GM10248 (cell line): ENCODE measurements at regions of chr7 and their contacts with region 1.

Region 1: DNA sequence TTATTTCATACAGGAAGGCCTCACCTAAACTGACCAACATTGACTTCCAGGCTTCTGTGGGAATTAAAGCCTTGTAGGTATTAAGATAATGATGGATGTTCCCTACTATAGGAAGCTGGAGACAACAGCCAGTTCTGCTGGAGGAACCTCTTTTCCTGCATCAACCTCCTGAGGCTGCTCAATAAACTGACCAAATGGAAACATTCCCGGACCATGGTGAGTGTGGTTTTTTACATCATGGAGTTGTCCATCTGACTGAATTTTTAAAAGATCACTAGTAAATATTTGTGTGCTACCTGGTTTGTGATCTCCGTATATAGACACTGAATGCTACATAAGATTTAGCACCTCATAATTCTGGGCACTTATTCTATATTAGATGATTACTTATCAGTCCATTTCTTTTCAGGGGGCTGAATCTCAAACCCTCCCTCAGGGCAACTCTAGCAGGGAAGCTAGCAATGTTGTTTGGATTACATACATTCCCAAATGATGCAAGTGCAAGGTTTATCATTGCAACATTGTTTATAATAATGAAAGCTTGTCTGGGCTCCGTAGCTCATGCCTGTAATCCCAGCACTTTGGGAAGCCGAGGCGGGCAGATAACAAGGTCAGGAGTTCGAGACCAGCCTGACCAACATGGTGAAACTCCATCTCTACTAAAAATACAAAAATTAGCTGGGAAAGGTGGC is 21.5 kb upstream of the SMKR1 start:
- DNase-seq: no peak
- CTCF ChIP-seq: no peak

Region 2: GRCh38 chr7:129271500-129272355 is 209.1 kb before region 1 on chr7:
- CTCF ChIA-PET with region 1: no interaction called
- POLR2A ChIA-PET with region 1: no interaction called
- DNase-seq: peak; percentile 59
- CTCF ChIP-seq: peak; percentile 55

Region 3: GRCh38 chr7:129494041-129494440 is 13.2 kb after region 1 on chr7:
- CTCF ChIA-PET with region 1: interaction called, 11 read pairs
- POLR2A ChIA-PET with region 1: no interaction called
- DNase-seq: no peak
- CTCF ChIP-seq: no peak

Region 4: GRCh38 chr7:129780257-129780973 is 299.6 kb after region 1 on chr7:
- CTCF ChIA-PET with region 1: no interaction called
- POLR2A ChIA-PET with region 1: no interaction called
- DNase-seq: peak; percentile 78
- CTCF ChIP-seq: no peak